Ovary (tissue), 10 donors: ENCODE measurements at regions of chr12 and their contacts with region 1.

Region 1: GRCh38 chr12:47715393-47715876 is 9.6 kb upstream of the RPAP3 start:
- DNase-seq: peak; percentile 81 to 92 (median 83)
- H3K4me3 ChIP-seq: no peak overlapping the region
- H3K27ac ChIP-seq: peak overlapping the region; percentile 60 to 84
- H3K4me1 ChIP-seq: peaks cover 39% of the 10 kb centered on the region
- H3K27me3 ChIP-seq: no peaks in the 10 kb centered on the region
- CTCF ChIP-seq: peak; percentile 60 to 97 (median 89)
- EP300 ChIP-seq: no peak
- POLR2A ChIP-seq: no peak

Region 2: DNA sequence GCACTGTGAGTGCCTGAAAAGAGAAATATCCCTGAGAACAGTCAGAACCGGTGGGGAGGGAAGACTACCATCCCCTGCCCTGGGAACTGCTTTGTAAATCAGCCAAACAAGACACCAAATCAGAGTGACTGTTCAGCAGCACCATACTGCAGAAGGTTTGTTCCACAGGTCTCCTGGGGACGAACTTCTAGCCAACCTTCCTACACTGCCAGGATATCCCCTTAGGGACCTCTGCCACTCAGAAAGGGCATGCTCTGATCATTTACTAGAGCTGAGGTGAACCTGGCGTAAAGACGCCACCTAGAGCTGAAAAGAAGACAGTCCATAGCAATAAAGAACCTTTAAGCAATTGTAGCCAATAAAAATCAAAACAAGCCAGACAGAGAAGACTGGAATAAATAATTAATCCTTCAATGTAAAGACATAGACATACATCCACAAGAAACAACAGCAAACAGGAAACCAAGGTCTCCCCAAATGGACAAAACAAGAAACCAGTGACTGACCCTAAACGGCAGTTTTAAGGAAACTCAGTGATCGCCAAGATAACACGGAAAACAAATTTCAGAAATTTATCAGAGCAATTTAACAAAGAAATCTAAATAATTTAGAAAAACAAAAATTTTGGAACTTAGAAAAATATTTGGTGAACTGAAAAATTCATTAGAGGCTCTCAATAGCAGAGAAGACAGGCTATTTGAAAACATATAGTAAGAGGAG is 407.6 kb before region 1 on chr12:
- intact Hi-C with region 1: no loop called
- DNase-seq: no peak
- H3K4me3 ChIP-seq: no peak overlapping the region
- H3K27ac ChIP-seq: no peak overlapping the region
- H3K4me1 ChIP-seq: no peaks in the 10 kb centered on the region
- H3K27me3 ChIP-seq: no peaks in the 10 kb centered on the region
- CTCF ChIP-seq: no peak
- EP300 ChIP-seq: no peak
- POLR2A ChIP-seq: no peak

Region 3: DNA sequence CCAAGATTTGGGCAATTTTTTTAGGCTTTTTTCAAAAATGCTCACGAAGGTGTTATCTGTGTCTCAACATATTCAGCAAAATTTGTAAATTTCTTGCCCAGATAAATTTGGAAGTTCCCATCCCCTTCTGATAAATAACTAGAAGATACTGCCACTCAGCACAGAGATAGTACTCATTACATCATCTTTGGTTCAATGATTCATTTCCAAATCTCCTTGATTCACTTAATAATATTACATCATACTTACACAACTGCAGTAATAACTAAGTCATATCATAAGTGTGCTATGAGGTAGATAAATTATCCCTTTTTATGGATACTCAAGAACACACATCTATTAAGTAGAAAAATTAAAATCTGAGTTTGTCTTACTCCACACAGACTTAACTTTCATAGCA is 99.0 kb before region 1 on chr12:
- intact Hi-C with region 1: no loop called
- DNase-seq: no peak
- H3K4me3 ChIP-seq: no peak overlapping the region
- H3K27ac ChIP-seq: no peak overlapping the region
- H3K4me1 ChIP-seq: no peaks in the 10 kb centered on the region
- H3K27me3 ChIP-seq: no peaks in the 10 kb centered on the region
- CTCF ChIP-seq: no peak
- EP300 ChIP-seq: no peak
- POLR2A ChIP-seq: no peak

Region 4: DNA sequence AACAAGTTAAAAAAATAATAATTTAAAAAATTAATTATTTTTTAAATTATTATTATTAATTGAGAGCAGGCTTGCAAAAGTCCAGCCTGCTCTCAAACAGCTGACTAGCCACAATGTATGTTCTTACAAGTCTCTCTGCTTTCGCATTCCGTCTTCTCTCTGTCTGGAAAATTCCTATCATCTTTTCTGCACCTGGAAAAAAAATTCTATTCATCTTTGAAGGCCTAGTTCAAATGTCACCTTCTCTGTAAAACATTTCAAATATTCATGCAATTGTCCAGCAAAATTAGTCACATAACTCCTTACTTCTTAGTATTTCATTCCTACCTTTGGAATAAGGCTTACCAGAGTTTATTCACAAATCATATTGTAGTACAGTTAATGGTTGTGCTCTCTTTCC is 85.1 kb before region 1 on chr12:
- intact Hi-C with region 1: no loop called
- DNase-seq: no peak
- H3K4me3 ChIP-seq: no peak overlapping the region
- H3K27ac ChIP-seq: no peak overlapping the region
- H3K4me1 ChIP-seq: no peaks in the 10 kb centered on the region
- H3K27me3 ChIP-seq: no peaks in the 10 kb centered on the region
- CTCF ChIP-seq: no peak
- EP300 ChIP-seq: no peak
- POLR2A ChIP-seq: no peak

Region 5: GRCh38 chr12:47758834-47759690 is 43.6 kb after region 1 on chr12 and contains the start of gene RAPGEF3:
- intact Hi-C with region 1: loop called in 1 of 4 experiments (anchors 5 kb)
- DNase-seq: peak; percentile 86 to 88 (median 87)
- H3K4me3 ChIP-seq: peak within 1 kb of the TSS; percentile 64
- H3K27ac ChIP-seq: peak within 1 kb of the TSS; percentile 13 to 78
- H3K4me1 ChIP-seq: peaks cover 25% of the 10 kb centered on the region
- H3K27me3 ChIP-seq: no peaks in the 10 kb centered on the region
- CTCF ChIP-seq: peak in 2 of 3 donors; percentile 70 to 81
- EP300 ChIP-seq: no peak
- POLR2A ChIP-seq: peak; percentile 26
- total RNA-seq, gene RAPGEF3: 50.4 to 132 (median 93.5) TPM

Region 6: GRCh38 chr12:47819896-47820630 is 104.6 kb after region 1 on chr12 and contains the start of gene HDAC7:
- intact Hi-C with region 1: loop called in 2 of 4 experiments (anchors 10 kb)
- DNase-seq: peak; percentile 85 to 92 (median 91)
- H3K4me3 ChIP-seq: peak within 1 kb of the TSS; percentile 81
- H3K27ac ChIP-seq: peak within 1 kb of the TSS; percentile 93 to 96
- H3K4me1 ChIP-seq: peaks cover 33% of the 10 kb centered on the region
- H3K27me3 ChIP-seq: no peaks in the 10 kb centered on the region
- CTCF ChIP-seq: peak in 1 of 3 donors; percentile 26
- EP300 ChIP-seq: no peak
- POLR2A ChIP-seq: peak; percentile 72
- total RNA-seq, gene HDAC7: 47.2 to 151 (median 103) TPM

Region 7: GRCh38 chr12:49314811-49315210 is 1599.4 kb after region 1 on chr12:
- intact Hi-C with region 1: no loop called
- DNase-seq: no peak
- H3K4me3 ChIP-seq: no peak overlapping the region
- H3K27ac ChIP-seq: no peak overlapping the region
- H3K4me1 ChIP-seq: no peaks in the 10 kb centered on the region
- H3K27me3 ChIP-seq: no peaks in the 10 kb centered on the region
- CTCF ChIP-seq: no peak
- EP300 ChIP-seq: no peak
- POLR2A ChIP-seq: no peak